ENCODE measurements at regions of chr11 and their contacts with region 1.

Region 1: GRCh38 chr11:17730608-17731462 is 3.7 kb upstream of the KCNC1 start:
- DNase-seq: peak; percentile 64 to 90
- ATAC-seq: peak; percentile 87 to 88
- H3K4me3 ChIP-seq: no peak overlapping the region
- H3K27ac ChIP-seq: peak overlapping the region; percentile 2 to 71 (median 34)
- H3K4me1 ChIP-seq: peaks cover 9 to 15% of the 10 kb centered on the region in 2 donors
- H3K27me3 ChIP-seq: peaks cover 3 to 5% (median 4%) of the 10 kb centered on the region in 3 donors
- CTCF ChIP-seq: peak; percentile 75 to 92 (median 87)
- POLR2A ChIP-seq: no peak

Region 2: DNA sequence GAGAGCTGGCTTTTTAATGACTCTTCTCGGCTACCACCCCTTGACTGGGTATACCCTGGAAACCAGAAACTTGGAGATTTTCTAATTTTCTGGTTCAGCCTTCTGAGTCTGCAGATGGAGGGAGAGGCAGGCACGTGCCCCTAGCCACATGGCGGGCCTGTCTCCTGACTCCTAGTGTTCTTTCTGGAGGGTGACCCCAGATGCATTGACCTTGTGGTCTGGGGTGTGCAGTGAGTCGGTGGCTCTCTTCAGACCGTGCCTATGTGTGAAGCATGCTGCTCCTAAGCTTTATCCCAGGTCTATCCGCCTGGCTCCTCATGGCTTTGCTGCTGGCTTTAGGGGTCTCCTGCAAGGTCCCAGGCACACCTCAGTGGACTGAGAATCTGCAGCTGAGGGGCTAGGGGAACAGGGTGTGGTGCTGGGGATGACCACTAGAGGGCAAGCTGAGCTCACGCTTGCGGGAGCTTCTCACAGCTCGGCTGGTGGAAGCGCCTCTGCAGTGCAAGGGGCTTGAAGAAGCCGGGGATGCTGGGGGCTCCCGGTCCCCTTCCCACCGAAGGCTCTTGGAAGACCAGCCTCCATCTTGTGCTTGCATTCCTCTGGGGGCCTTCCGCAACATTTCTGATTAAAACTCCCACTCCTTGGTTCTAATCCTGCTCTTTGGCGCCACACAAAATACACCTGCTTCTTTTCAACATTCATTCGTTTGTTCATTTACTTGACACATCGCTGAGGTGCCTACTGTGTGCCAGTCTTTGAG is 132.0 kb before region 1 on chr11:
- in situ Hi-C with region 1: loop called in 2 of 4 experiments (anchors 5 kb)
- intact Hi-C with region 1: loop called (anchors 1 kb)
- DNase-seq: peak; percentile 54 to 62
- ATAC-seq: peak; percentile 87 to 90
- H3K4me3 ChIP-seq: no peak overlapping the region
- H3K27ac ChIP-seq: no peak overlapping the region
- H3K4me1 ChIP-seq: peaks cover 0 to 3% of the 10 kb centered on the region in 2 donors
- H3K27me3 ChIP-seq: no peaks in the 10 kb centered on the region
- CTCF ChIP-seq: peak; percentile 90 to 97 (median 96)
- POLR2A ChIP-seq: no peak

Region 3: GRCh38 chr11:17750013-17750800 is 19.4 kb after region 1 on chr11:
- in situ Hi-C with region 1: no loop called
- intact Hi-C with region 1: loop called (anchors 2 kb)
- DNase-seq: no peak
- ATAC-seq: peak in 1 of 2 donors; percentile 51
- H3K4me3 ChIP-seq: no peak overlapping the region
- H3K27ac ChIP-seq: peak overlapping the region in 3 of 4 donors; percentile 13 to 60 (median 18)
- H3K4me1 ChIP-seq: peaks cover 36 to 47% of the 10 kb centered on the region in 2 donors
- H3K27me3 ChIP-seq: no peaks in the 10 kb centered on the region
- CTCF ChIP-seq: no peak
- POLR2A ChIP-seq: no peak

Region 4: GRCh38 chr11:17798253-17798652 is 67.4 kb after region 1 on chr11:
- in situ Hi-C with region 1: no loop called
- intact Hi-C with region 1: loop called (anchors 5 kb)
- DNase-seq: peak; percentile 90 to 95
- ATAC-seq: peak; percentile 90 to 91
- H3K4me3 ChIP-seq: peak overlapping the region in 2 of 4 donors; percentile 12 to 35
- H3K27ac ChIP-seq: peak overlapping the region; percentile 90 to 96 (median 94)
- H3K4me1 ChIP-seq: peaks cover 50 to 52% of the 10 kb centered on the region in 2 donors
- H3K27me3 ChIP-seq: no peaks in the 10 kb centered on the region
- CTCF ChIP-seq: no peak
- POLR2A ChIP-seq: peak in 1 of 2 donors; percentile 35

Region 5: GRCh38 chr11:17846852-17847453 is 116.1 kb after region 1 on chr11:
- in situ Hi-C with region 1: loop called in 1 of 4 experiments (anchors 10 kb)
- intact Hi-C with region 1: loop called (anchors 1 kb)
- DNase-seq: peak; percentile 42 to 73
- ATAC-seq: peak; percentile 86 to 88
- H3K4me3 ChIP-seq: no peak overlapping the region
- H3K27ac ChIP-seq: peak overlapping the region; percentile 44 to 62 (median 51)
- H3K4me1 ChIP-seq: peaks cover 29 to 38% of the 10 kb centered on the region in 2 donors
- H3K27me3 ChIP-seq: no peaks in the 10 kb centered on the region
- CTCF ChIP-seq: peak; percentile 40 to 68 (median 61)
- POLR2A ChIP-seq: peak in 1 of 2 donors; percentile 30

Region 6: GRCh38 chr11:17864478-17864941 is 133.7 kb after region 1 on chr11:
- in situ Hi-C with region 1: no loop called
- intact Hi-C with region 1: no loop called
- DNase-seq: no peak
- ATAC-seq: no peak
- H3K4me3 ChIP-seq: no peak overlapping the region
- H3K27ac ChIP-seq: no peak overlapping the region
- H3K4me1 ChIP-seq: peaks cover 0 to 3% of the 10 kb centered on the region in 2 donors
- H3K27me3 ChIP-seq: no peaks in the 10 kb centered on the region
- CTCF ChIP-seq: peak in 1 of 5 experiments; percentile 31
- POLR2A ChIP-seq: no peak

Measured in gastrocnemius medialis (tissue), 4 donors.